ENCODE measurements at regions of chr13 and their contacts with region 1.

Region 1: GRCh38 chr13:52450012-52450792 is at the start of gene VPS36:
- DNase-seq: peak; percentile 93
- H3K4me3 Mint-ChIP-seq: peak within 1 kb of the TSS; percentile 96
- H3K27ac Mint-ChIP-seq: peak within 1 kb of the TSS; percentile 93
- H3K4me1 Mint-ChIP-seq: peaks cover 57% of the 10 kb centered on the region
- H3K27me3 Mint-ChIP-seq: peaks cover 2% of the 10 kb centered on the region
- total RNA-seq, gene VPS36: 47.8 and 49.2 TPM in 2 replicates

Region 2: GRCh38 chr13:51452361-51453206 is 997.6 kb before region 1 on chr13 and contains the start of gene INTS6:
- intact Hi-C with region 1: loop called (anchors 2 kb)
- DNase-seq: peak; percentile 99
- H3K4me3 Mint-ChIP-seq: peak within 1 kb of the TSS; percentile 92
- H3K27ac Mint-ChIP-seq: peak within 1 kb of the TSS; percentile 98
- H3K4me1 Mint-ChIP-seq: peaks cover 52% of the 10 kb centered on the region
- H3K27me3 Mint-ChIP-seq: no peaks in the 10 kb centered on the region
- total RNA-seq, gene INTS6: 76.6 and 81.7 TPM in 2 replicates

Region 3: DNA sequence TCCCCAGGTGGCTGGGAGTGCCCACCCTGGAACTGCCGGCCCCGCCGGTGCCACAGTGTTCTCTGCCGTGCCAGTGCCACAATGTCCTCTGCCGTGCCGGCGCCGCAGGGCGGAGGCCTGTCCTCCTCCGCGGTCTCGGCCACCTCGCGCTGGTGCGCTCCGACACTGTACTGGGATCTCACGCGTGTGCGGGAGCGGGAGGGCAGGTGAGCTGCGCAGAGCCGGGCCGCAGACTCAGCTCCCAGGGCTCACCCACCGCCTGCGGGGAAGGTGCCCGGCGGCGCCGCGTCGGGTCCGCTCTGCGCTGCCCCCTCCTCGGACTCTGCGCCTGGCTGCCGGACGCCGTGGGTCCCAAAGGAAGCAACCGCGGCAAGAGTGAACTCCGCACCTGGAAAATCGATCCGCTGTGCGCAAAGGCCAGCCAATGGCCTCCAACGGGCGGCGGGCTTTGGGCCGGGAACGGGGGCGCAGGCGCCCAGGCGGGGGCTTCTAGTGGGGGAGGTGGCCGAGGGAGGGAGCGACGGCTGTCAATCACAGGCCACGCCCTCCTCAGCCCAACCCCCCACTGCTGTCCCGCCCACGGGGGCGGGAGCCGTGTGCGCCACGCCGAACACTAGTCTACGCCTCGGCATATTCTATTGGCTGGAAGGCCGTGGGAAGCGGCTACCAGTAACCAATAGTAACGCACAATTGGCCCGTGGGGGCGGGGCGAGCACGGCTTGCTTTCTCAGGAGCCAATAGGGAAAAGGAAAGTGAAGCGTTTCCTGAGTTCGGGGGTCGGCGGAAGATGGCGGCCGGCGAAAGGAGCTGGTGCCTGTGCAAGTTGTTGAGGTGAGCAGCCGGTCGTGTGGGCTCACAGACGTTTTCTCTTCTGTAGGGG is 438.3 kb before region 1 on chr13 and contains the start of gene ALG11:
- intact Hi-C with region 1: loop called (anchors 1 kb)
- DNase-seq: peak; percentile 100
- H3K4me3 Mint-ChIP-seq: peak within 1 kb of the TSS; percentile 99
- H3K27ac Mint-ChIP-seq: peak within 1 kb of the TSS; percentile 88
- H3K4me1 Mint-ChIP-seq: peaks cover 13% of the 10 kb centered on the region
- H3K27me3 Mint-ChIP-seq: peaks cover 34% of the 10 kb centered on the region
- total RNA-seq, gene ALG11: 24.7 and 28.6 TPM in 2 replicates

Region 4: GRCh38 chr13:52159321-52160086 is 290.7 kb before region 1 on chr13 and contains the start of gene NEK3:
- intact Hi-C with region 1: loop called (anchors 1 kb)
- DNase-seq: peak; percentile 57
- H3K4me3 Mint-ChIP-seq: peak within 1 kb of the TSS; percentile 87
- H3K27ac Mint-ChIP-seq: peak within 1 kb of the TSS; percentile 76
- H3K4me1 Mint-ChIP-seq: peaks cover 51% of the 10 kb centered on the region
- H3K27me3 Mint-ChIP-seq: no peaks in the 10 kb centered on the region
- total RNA-seq, gene NEK3: 10.5 and 12.0 TPM in 2 replicates

Region 5: GRCh38 chr13:52348983-52349780 is 101.0 kb before region 1 on chr13:
- intact Hi-C with region 1: loop called (anchors 2 kb)
- DNase-seq: no peak
- H3K4me3 Mint-ChIP-seq: no peak overlapping the region
- H3K27ac Mint-ChIP-seq: no peak overlapping the region
- H3K4me1 Mint-ChIP-seq: no peaks in the 10 kb centered on the region
- H3K27me3 Mint-ChIP-seq: peaks cover 2% of the 10 kb centered on the region

Region 6: GRCh38 chr13:52617070-52618060 is 167.2 kb after region 1 on chr13:
- intact Hi-C with region 1: loop called (anchors 1 kb)
- DNase-seq: peak; percentile 80
- H3K4me3 Mint-ChIP-seq: peak overlapping the region; percentile 99
- H3K27ac Mint-ChIP-seq: peak overlapping the region; percentile 95
- H3K4me1 Mint-ChIP-seq: peaks cover 13% of the 10 kb centered on the region
- H3K27me3 Mint-ChIP-seq: no peaks in the 10 kb centered on the region

Region 7: GRCh38 chr13:52695856-52696255 is 245.7 kb after region 1 on chr13:
- intact Hi-C with region 1: loop called (anchors 5 kb)
- DNase-seq: peak; percentile 4
- H3K4me3 Mint-ChIP-seq: no peak overlapping the region
- H3K27ac Mint-ChIP-seq: peak overlapping the region; percentile 55
- H3K4me1 Mint-ChIP-seq: peaks cover 18% of the 10 kb centered on the region
- H3K27me3 Mint-ChIP-seq: no peaks in the 10 kb centered on the region